Activated T-helper 1 cell treated with anti-CD3 and anti-CD28 coated beads, Interleukin-12 subunit alpha, Interleukin-12 subunit beta, Interleukin-2, Interleukin-4 antibody, amounts not matched to agents 30 ng/mL and 10 ng/mL and 1 ng/mL, durations not matched to agents 14 hours and 24 hours and 36 hours (primary cell): ENCODE measurements at regions of chr9 and their contacts with region 1.

Region 1: DNA sequence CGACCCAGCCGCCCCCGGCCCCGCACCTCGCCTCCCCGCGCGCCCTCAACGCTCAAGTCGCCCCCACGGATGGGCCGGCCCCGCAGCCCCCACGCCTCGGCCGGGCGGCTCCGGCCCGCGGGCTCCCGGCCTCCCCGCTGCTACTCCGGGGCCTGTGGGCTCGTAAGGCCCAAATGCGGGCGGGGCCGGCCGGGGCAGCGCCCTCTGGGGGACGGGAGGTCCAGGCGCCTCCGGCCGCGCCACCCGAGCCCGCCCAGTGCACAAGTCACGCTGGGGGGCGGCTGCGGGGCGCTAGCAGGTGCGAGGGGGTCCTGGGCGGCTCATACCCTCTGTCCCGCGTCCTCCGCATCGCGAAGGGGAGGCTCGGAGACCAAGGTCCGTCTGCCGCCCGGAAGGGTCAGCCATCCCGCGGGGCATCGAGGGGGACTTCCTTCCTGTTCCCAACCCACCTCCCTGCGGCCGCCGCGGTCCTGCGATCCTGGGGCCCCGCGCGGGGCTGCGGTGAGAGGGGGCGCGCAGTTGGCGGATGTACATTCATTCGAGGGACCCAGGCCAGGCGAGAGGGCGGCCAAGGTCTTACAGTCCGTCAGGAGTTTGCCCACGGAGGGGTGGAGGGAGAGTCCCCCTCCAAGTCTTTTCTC is at the start of gene CIZ1:
- DNase-seq: peak; percentile 69
- H3K4me3 Mint-ChIP-seq: peak within 1 kb of the TSS; percentile 98
- H3K27ac Mint-ChIP-seq: peak within 1 kb of the TSS; percentile 96
- H3K4me1 Mint-ChIP-seq: peaks cover 23% of the 10 kb centered on the region
- H3K27me3 Mint-ChIP-seq: no peaks in the 10 kb centered on the region
- total RNA-seq, gene CIZ1: 154 and 158 TPM in 2 replicates

Region 2: DNA sequence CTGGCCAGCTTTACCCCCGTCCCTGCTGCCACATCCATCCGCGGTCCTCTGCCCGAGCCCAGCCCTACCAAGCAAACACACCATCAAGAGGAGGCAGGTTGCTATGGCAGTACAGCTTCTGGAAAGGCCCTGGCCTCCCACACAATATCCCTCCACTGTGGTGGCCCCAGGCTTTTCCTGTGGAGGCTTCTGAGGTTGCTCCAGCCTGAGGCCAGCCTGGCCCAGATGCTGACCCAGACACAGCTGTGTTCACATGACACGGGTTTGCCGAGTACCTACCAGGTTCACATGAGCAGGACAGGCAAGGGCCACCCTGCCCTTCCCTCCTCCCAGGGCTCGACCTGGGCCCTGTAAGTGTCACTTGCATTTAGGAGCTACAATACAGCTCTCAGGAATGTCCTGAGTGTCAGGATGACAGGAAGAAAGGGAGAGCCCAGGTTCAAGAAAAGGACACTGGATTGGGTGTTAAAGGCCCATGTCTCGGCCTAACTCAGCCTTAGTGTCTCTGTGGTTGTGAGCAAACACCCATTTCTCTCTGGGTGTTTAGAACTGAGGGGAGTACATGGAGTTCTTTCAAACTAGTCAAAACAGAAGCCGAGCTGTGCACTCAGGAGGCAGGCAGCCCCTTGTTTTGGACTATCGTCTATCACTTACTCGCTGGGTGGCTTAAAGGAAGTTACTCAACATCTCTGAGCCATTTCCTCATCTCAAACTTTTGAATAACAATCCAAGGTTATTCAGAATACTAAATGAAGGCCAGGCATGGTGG is 164.6 kb before region 1 on chr9:
- intact Hi-C with region 1: no loop called
- DNase-seq: peak; percentile 37
- H3K4me3 Mint-ChIP-seq: peak overlapping the region; percentile 60
- H3K27ac Mint-ChIP-seq: peak overlapping the region; percentile 93
- H3K4me1 Mint-ChIP-seq: peaks cover 81% of the 10 kb centered on the region
- H3K27me3 Mint-ChIP-seq: peaks cover 4% of the 10 kb centered on the region

Region 3: GRCh38 chr9:128175102-128175563 is 16.4 kb before region 1 on chr9:
- intact Hi-C with region 1: no loop called
- DNase-seq: no peak
- H3K4me3 Mint-ChIP-seq: no peak overlapping the region
- H3K27ac Mint-ChIP-seq: no peak overlapping the region
- H3K4me1 Mint-ChIP-seq: no peaks in the 10 kb centered on the region
- H3K27me3 Mint-ChIP-seq: no peaks in the 10 kb centered on the region

Region 4: DNA sequence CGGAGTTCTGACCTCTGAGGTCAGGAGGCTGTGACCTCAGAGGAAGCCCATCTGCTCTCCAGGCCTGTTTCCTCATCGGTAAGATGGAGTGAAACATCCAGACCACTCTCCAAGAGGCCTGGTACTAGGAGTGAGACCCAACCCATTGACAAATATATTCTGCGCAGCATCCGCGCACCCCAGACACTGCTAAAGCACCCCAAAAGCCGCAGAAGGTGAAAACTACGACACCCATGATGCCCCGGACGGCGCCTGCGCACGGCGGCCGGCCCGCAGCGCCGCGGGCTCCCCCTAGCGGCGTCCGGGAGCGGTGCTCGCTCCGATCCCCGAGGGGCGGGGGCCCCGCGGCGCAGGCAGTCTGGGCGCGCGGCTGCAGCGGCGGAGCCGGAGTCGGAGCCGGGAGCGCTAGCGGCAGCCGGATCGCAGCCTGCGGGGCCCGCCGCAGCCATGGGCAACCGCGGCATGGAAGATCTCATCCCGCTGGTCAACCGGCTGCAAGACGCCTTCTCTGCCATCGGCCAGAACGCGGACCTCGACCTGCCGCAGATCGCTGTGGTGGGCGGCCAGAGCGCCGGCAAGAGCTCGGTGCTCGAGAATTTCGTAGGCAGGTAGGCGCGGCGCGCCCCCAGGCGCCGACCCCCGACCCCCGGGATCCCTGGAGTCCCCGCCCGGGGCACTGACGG is 11.6 kb after region 1 on chr9 and contains the start of gene DNM1:
- intact Hi-C with region 1: loop called (anchors 1 kb)
- DNase-seq: peak; percentile 75
- H3K4me3 Mint-ChIP-seq: peak within 1 kb of the TSS; percentile 78
- H3K27ac Mint-ChIP-seq: peak within 1 kb of the TSS; percentile 83
- H3K4me1 Mint-ChIP-seq: peaks cover 21% of the 10 kb centered on the region
- H3K27me3 Mint-ChIP-seq: peaks cover 27% of the 10 kb centered on the region
- total RNA-seq, gene DNM1: 1.4 and 1.8 TPM in 2 replicates

Region 5: GRCh38 chr9:128231638-128232527 is 40.4 kb after region 1 on chr9:
- intact Hi-C with region 1: no loop called
- DNase-seq: no peak
- H3K4me3 Mint-ChIP-seq: no peak overlapping the region
- H3K27ac Mint-ChIP-seq: no peak overlapping the region
- H3K4me1 Mint-ChIP-seq: no peaks in the 10 kb centered on the region
- H3K27me3 Mint-ChIP-seq: peaks cover 3% of the 10 kb centered on the region

Region 6: DNA sequence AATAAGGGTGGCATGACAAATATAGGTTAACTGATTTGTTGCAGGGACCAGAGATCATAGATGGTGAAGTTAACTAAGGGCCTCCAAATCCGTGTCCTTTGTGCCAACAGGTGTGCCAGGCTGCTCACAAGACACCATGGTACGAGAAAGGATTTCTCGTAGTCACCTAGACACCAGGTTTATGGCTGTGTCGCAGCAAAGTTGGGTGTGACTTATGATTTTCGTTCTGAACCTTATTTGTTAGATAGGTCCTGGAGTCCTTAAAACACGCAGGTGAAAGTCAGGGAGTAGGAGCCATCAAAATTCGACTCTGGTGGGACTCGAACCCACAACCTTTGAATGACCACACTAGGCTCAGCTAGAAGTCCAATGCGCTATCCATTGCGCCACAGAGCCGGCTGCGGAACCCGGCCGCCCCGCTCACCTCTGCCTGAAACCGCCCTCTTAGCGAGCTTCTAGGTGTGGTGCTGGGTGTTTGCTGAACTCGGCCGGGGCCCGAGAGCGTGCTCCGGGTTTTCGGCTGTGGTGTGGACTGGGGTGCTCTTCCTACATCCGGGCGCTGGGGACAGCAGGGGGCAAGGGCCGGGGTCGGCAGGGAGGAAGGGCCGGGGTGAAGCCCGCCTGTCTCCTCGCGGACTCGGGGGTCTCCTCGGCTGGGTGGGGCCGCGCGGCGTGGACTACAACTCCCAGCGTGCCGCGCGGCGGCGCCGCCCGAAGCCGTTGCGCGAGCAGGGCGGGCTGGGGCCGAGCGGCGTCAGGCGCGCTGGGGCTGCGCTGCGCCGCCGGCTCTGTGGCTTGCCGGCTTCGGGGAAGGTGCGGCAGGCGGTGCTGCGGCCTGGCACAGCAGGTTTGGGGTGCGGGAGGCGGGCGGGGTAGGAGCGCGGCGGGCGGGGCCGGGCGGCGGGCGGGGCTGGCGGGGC is 148.5 kb after region 1 on chr9 and contains the start of gene SLC27A4:
- intact Hi-C with region 1: loop called (anchors 1 kb)
- DNase-seq: peak; percentile 82
- H3K4me3 Mint-ChIP-seq: peak within 1 kb of the TSS; percentile 94
- H3K27ac Mint-ChIP-seq: peak within 1 kb of the TSS; percentile 88
- H3K4me1 Mint-ChIP-seq: peaks cover 6% of the 10 kb centered on the region
- H3K27me3 Mint-ChIP-seq: no peaks in the 10 kb centered on the region
- total RNA-seq, gene SLC27A4: 41.8 and 43.2 TPM in 2 replicates